Activated T-helper 2 cell treated with anti-CD3 and anti-CD28 coated beads, Interferon-gamma antibody, Interleukin-2, Interleukin-4, amounts not matched to agents 10 μg/mL and 5 μg/mL and 100 μg/mL, durations not matched to agents 14 hours and 24 hours and 36 hours (primary cell): ENCODE measurements at regions of chr13 and their contacts with region 1.

Region 1: GRCh38 chr13:28138012-28138755 is at the start of gene PAN3:
- DNase-seq: peak; percentile 90
- H3K4me3 Mint-ChIP-seq: peak within 1 kb of the TSS; percentile 97
- H3K27ac Mint-ChIP-seq: peak within 1 kb of the TSS; percentile 98
- H3K4me1 Mint-ChIP-seq: peaks cover 38% of the 10 kb centered on the region
- H3K27me3 Mint-ChIP-seq: no peaks in the 10 kb centered on the region
- total RNA-seq, gene PAN3: 35.4 and 35.6 TPM in 2 replicates

Region 2: DNA sequence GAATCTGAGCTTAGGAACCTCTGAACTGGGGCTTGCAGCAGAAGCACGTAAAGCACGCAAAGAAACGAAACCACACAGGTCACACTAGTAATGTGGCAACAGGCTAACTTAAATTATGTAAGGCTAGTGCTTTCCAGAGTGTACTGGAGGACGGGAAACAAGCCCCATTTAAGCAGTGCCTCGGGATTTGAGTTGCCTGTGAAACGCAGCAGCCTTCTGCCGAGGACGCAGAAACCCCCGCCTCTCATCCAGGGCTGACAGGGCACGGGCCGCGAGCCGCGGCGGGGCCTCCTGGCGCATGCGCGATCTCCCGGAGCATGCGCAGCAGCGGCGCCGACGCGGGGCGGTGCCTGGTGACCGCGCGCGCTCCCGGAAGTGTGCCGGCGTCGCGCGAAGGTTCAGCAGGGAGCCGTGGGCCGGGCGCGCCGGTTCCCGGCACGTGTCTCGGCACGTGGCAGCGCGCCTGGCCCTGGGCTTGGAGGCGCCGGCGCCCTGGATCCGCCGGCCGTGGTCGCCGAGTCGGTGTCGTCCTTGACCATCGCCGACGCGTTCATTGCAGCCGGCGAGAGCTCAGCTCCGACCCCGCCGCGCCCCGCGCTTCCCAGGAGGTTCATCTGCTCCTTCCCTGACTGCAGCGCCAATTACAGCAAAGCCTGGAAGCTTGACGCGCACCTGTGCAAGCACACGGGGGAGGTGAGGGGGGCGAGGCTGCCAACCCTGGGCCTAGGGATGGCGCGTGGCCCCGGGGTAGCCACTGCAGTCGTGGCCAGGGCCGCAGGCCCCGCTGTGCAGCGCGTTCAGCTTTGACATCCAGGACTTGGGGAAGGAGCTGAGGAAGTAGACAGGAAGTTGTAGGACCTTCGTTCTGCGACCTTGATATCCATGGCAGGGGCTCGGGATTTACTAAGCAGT is 713.7 kb before region 1 on chr13 and contains the start of gene GTF3A:
- intact Hi-C with region 1: loop called (anchors 10 kb)
- DNase-seq: peak; percentile 86
- H3K4me3 Mint-ChIP-seq: peak within 1 kb of the TSS; percentile 89
- H3K27ac Mint-ChIP-seq: peak within 1 kb of the TSS; percentile 94
- H3K4me1 Mint-ChIP-seq: peaks cover 36% of the 10 kb centered on the region
- H3K27me3 Mint-ChIP-seq: no peaks in the 10 kb centered on the region
- total RNA-seq, gene GTF3A: 251 and 253 TPM in 2 replicates

Region 3: GRCh38 chr13:27620377-27621115 is 517.6 kb before region 1 on chr13 and contains the start of gene LNX2:
- intact Hi-C with region 1: loop called (anchors 2 kb)
- DNase-seq: peak; percentile 95
- H3K4me3 Mint-ChIP-seq: peak within 1 kb of the TSS; percentile 90
- H3K27ac Mint-ChIP-seq: peak within 1 kb of the TSS; percentile 88
- H3K4me1 Mint-ChIP-seq: peaks cover 47% of the 10 kb centered on the region
- H3K27me3 Mint-ChIP-seq: no peaks in the 10 kb centered on the region
- total RNA-seq, gene LNX2: 5.2 and 5.4 TPM in 2 replicates

Region 4: DNA sequence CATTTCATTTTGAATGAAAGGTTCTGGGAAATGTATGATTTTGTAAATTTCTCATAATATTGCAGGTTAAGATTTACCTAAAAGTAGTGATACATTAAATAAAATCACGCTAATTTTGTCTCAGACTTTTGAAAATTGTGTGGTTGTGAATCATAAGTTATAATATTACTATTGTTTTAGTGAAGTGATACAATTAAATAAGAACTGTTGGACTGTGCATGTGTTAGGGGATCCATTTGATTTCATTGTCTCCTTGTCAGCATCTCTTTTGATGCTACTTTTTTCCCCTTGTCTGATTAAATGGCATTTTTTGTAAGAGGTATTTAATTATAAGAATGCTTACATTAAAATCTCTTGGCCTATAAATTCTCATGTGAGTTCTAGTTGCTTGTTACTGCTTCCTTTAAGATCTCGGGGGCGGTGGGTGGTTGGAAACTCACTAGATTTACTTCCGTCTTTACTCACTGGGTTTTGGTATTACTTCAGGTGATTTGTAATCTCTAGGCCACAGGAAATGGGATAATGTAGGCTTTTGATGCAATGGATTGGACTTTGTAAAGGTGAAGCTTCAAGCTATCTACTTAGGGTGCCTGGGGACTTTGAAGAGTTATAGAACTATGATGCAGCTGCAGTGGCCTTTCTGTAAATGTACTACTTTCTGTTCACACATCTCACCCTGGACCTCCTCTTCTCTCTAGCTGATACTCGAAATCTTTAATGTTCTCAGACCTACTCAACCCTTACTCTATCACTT is 66.7 kb after region 1 on chr13:
- intact Hi-C with region 1: loop called (anchors 1 kb)
- DNase-seq: no peak
- H3K4me3 Mint-ChIP-seq: no peak overlapping the region
- H3K27ac Mint-ChIP-seq: peak overlapping the region; percentile 39
- H3K4me1 Mint-ChIP-seq: peaks cover 18% of the 10 kb centered on the region
- H3K27me3 Mint-ChIP-seq: no peaks in the 10 kb centered on the region

Region 5: GRCh38 chr13:28718543-28719226 is 580.5 kb after region 1 on chr13 and contains the start of gene SLC46A3:
- intact Hi-C with region 1: loop called (anchors 5 kb)
- DNase-seq: peak; percentile 95
- H3K4me3 Mint-ChIP-seq: peak within 1 kb of the TSS; percentile 92
- H3K27ac Mint-ChIP-seq: peak within 1 kb of the TSS; percentile 60
- H3K4me1 Mint-ChIP-seq: peaks cover 26% of the 10 kb centered on the region
- H3K27me3 Mint-ChIP-seq: peaks cover 4% of the 10 kb centered on the region
- total RNA-seq, gene SLC46A3: 2.8 and 3.1 TPM in 2 replicates